Activated CD8-positive, alpha-beta T cell treated with anti-CD3 and anti-CD28 coated beads, Interleukin-2, amount 10 ng/mL, durations not matched to agents 7 days and 5 days (primary cell): ENCODE measurements at regions of chr1 and their contacts with region 1.

Region 1: DNA sequence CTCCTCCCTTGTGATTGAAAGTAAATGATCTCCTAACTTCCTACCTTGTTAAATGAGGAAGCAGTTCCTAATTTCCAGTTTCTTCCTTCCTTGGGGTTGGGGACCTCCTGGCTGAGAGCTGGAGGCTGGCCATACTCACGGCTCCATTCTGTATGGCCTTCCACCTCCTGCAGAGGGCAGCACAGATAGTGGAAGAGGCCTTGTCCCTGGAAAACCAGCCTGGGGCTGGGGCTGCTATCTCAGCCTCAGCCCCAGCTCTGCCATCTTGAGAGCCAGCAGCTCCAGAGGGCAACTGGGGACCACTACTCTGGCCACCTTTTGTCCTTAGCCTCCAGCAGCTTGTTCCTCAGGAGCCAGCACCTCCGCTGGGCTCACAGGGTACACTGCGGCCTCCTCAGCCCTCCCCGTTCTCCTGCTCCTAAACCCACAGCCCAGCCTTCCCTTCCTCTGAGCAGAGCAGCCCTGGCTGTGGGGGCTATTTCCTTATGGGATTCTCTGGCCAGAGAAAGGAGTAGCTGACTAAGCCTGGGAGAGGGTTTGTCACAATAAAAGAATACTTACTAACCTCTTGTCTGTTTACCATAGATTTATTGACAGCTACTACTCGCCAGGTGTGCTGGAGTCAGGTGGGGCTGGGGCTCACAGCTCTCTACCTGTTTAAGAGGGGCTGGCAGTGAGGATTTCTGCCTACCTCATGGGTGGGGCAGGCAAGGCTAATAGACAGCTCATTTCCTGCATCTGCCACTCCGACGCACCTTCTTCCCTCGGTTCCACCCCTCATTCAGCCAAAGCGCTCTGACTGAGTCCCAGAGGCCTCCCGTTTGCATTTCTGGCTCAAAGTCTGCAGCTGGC is 6.3 kb downstream of the TMEM234 start:
- DNase-seq: peak; percentile 74
- ATAC-seq: peak; percentile 90
- H3K4me3 Mint-ChIP-seq: no peak overlapping the region
- H3K27ac Mint-ChIP-seq: peak overlapping the region; percentile 43
- H3K4me1 Mint-ChIP-seq: peaks cover 15% of the 10 kb centered on the region
- H3K27me3 Mint-ChIP-seq: no peaks in the 10 kb centered on the region

Region 2: DNA sequence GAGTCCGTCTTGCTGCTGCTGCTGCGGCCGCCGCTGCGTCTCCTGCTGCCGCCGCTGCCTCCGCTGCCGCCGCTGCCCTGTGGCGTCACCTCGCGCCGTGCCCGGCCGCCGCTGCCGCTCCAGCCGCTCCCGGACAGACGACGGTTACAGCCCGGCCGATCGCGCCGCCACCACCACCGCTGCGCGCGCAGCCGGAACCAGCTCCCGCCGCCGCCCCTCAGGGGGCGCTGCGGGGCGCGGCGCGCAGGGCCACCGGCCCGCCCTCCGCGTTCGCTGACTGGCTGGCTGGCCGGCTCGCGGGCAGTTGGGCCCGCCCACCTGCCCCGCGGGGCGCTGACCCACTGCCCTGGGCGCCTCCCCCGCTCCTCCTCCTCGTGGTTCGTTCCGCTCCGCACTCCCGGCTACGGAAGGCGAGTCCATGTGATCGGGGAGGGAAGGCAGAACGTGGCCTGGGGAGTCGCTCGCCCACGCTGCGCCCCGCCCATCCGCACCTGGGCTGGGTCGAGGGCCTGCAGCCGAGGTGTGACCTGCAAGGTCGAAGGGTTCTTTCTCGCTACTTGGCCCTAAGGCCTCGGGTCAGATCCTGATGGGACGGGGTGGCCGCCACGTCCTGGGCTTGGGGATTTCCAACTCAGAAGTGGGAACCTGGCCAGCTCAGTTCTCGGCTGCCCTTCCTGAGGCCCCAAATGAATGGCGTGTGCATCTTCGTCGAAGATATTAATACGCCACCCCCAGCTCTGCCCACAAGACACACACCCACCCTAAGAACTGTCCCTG is 277.5 kb before region 1 on chr1 and contains the start of gene PTP4A2:
- CTCF ChIA-PET with region 1: no interaction called
- POLR2A ChIA-PET with region 1: no interaction called
- DNase-seq: peak; percentile 90
- ATAC-seq: peak; percentile 73
- H3K4me3 Mint-ChIP-seq: peak within 1 kb of the TSS; percentile 86
- H3K27ac Mint-ChIP-seq: peak within 1 kb of the TSS; percentile 99
- H3K4me1 Mint-ChIP-seq: peaks cover 70% of the 10 kb centered on the region
- H3K27me3 Mint-ChIP-seq: no peaks in the 10 kb centered on the region
- total RNA-seq, gene PTP4A2: 409 to 419 TPM

Region 3: GRCh38 chr1:32179443-32180185 is 36.2 kb before region 1 on chr1 and contains the start of gene TXLNA:
- CTCF ChIA-PET with region 1: interaction called, 11 read pairs
- POLR2A ChIA-PET with region 1: no interaction called
- DNase-seq: peak; percentile 93
- ATAC-seq: peak; percentile 91
- H3K4me3 Mint-ChIP-seq: peak within 1 kb of the TSS; percentile 95
- H3K27ac Mint-ChIP-seq: peak within 1 kb of the TSS; percentile 99
- H3K4me1 Mint-ChIP-seq: peaks cover 45% of the 10 kb centered on the region
- H3K27me3 Mint-ChIP-seq: no peaks in the 10 kb centered on the region
- total RNA-seq, gene TXLNA: 79.7 to 79.8 TPM

Region 4: GRCh38 chr1:32205401-32206370 is 10.2 kb before region 1 on chr1 and contains the start of gene IQCC:
- CTCF ChIA-PET with region 1: interaction called, 52 read pairs
- POLR2A ChIA-PET with region 1: interaction called, 22 read pairs
- DNase-seq: peak; percentile 88
- ATAC-seq: peak; percentile 79
- H3K4me3 Mint-ChIP-seq: peak within 1 kb of the TSS; percentile 88
- H3K27ac Mint-ChIP-seq: peak within 1 kb of the TSS; percentile 86
- H3K4me1 Mint-ChIP-seq: peaks cover 49% of the 10 kb centered on the region
- H3K27me3 Mint-ChIP-seq: no peaks in the 10 kb centered on the region
- total RNA-seq, gene IQCC: 6.1 to 6.3 TPM

Region 5: GRCh38 chr1:32240140-32240951 is 24.5 kb after region 1 on chr1:
- CTCF ChIA-PET with region 1: interaction called, 32 read pairs
- POLR2A ChIA-PET with region 1: interaction called, 13 read pairs
- DNase-seq: peak; percentile 62
- ATAC-seq: peak; percentile 76
- H3K4me3 Mint-ChIP-seq: peak overlapping the region; percentile 82
- H3K27ac Mint-ChIP-seq: peak overlapping the region; percentile 72
- H3K4me1 Mint-ChIP-seq: peaks cover 28% of the 10 kb centered on the region
- H3K27me3 Mint-ChIP-seq: no peaks in the 10 kb centered on the region

Region 6: GRCh38 chr1:32291708-32292492 is 76.0 kb after region 1 on chr1 and contains the start of gene HDAC1:
- CTCF ChIA-PET with region 1: interaction called, 42 read pairs
- POLR2A ChIA-PET with region 1: interaction called, 5 read pairs
- DNase-seq: peak; percentile 98
- ATAC-seq: peak; percentile 99
- H3K4me3 Mint-ChIP-seq: peak within 1 kb of the TSS; percentile 100
- H3K27ac Mint-ChIP-seq: peak within 1 kb of the TSS; percentile 98
- H3K4me1 Mint-ChIP-seq: peaks cover 57% of the 10 kb centered on the region
- H3K27me3 Mint-ChIP-seq: no peaks in the 10 kb centered on the region
- total RNA-seq, gene HDAC1: 219 to 227 TPM

Region 7: DNA sequence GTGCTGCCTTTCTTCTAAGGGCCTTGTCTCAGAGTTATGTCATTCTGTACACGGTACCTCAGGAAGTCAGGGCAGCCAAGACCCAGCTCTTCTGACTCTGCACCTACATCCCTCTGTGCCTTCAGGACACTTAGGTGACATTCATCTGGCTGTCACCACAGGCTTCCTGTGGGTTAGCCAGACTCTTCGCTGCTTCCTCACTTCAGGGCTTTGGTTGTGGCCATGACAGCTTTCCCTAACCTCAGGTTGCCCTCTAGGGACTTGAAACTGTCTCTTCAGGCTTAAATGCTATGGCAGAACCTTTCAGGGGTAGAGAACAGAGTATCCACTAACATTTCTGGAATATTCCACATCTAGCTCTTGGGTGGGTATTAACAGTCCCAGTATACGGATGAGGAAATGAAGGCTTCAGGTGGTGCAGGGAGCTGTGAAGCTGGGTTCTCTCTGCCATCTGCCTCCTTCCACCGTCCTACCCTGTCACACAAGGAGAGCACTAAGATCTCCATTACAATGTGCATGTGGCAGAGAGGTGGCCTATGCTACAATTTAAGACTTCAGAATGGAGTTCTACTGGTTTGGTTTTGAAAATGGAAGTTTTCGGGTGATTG is 156.4 kb after region 1 on chr1:
- CTCF ChIA-PET with region 1: interaction called, 22 read pairs
- POLR2A ChIA-PET with region 1: interaction called, 4 read pairs
- DNase-seq: peak; percentile 80
- ATAC-seq: peak; percentile 87
- H3K4me3 Mint-ChIP-seq: no peak overlapping the region
- H3K27ac Mint-ChIP-seq: peak overlapping the region; percentile 30
- H3K4me1 Mint-ChIP-seq: peaks cover 19% of the 10 kb centered on the region
- H3K27me3 Mint-ChIP-seq: no peaks in the 10 kb centered on the region

Region 8: GRCh38 chr1:32400876-32401631 is 185.2 kb after region 1 on chr1:
- CTCF ChIA-PET with region 1: interaction called, 13 read pairs
- POLR2A ChIA-PET with region 1: no interaction called
- DNase-seq: peak; percentile 63
- ATAC-seq: peak; percentile 90
- H3K4me3 Mint-ChIP-seq: no peak overlapping the region
- H3K27ac Mint-ChIP-seq: no peak overlapping the region
- H3K4me1 Mint-ChIP-seq: peaks cover 1% of the 10 kb centered on the region
- H3K27me3 Mint-ChIP-seq: peaks cover 4% of the 10 kb centered on the region